ENCODE measurements at regions of chr10 and their contacts with region 1.

Region 1: GRCh38 chr10:17737027-17737965 is 14.7 kb upstream of the TMEM236 start:
- DNase-seq: peak; percentile 76 to 85 (median 84)
- ATAC-seq: peak; percentile 49 to 64
- H3K4me3 ChIP-seq: no peak overlapping the region
- H3K27ac ChIP-seq: peak overlapping the region; percentile 14
- H3K4me1 ChIP-seq: peaks cover 5% of the 10 kb centered on the region
- H3K27me3 ChIP-seq: no peaks in the 10 kb centered on the region

Region 2: DNA sequence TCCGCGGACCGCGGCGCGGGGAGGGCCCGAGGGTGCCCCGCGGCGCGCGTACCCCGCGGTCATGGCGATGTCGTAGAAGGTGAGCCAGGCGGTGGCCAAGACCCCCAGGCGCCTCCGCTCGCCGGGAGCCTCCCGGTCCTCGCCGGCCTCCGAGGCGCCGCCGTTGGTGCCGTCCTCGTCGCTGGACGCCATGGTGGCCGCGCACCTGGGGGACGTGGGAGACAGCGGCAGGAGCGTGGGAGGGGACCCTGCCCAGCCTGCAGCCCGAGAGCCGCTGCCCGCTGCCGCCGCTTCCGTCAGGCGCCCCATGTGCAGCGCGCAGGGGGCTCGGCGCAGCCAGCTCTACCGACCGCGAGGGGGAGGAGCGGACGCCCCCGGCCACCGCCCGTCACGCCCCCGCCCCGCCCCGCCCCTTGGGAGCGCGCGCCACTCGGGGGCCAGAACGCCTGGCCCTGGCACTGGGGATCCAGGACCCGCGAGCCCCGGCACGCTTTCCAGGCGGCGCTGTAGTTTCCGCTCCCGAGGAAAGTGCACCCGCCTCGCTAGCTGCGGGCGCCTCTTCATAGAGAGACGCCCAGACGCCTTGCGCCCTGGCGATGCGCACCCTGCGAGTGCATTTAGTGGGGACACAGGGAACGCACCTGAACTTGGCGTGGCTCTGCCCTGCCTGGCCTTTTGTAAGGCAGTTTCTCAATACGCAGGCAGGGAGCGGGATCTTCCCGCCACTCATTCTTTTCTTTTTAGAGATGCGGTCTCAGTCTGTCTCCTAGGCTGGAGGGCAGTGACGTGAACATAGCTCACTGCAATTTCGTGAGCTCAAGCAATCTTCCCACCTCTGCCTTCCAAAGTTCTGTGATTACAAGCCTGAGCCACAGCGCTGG is 120.0 kb before region 1 on chr10 and contains the start of gene HACD1:
- intact Hi-C with region 1: loop called in 1 of 4 experiments (anchors 10 kb)
- DNase-seq: peak; percentile 62 to 86 (median 83)
- ATAC-seq: peak; percentile 90
- H3K4me3 ChIP-seq: peak within 1 kb of the TSS; percentile 80
- H3K27ac ChIP-seq: peak within 1 kb of the TSS; percentile 75
- H3K4me1 ChIP-seq: no peaks in the 10 kb centered on the region
- H3K27me3 ChIP-seq: no peaks in the 10 kb centered on the region
- total RNA-seq, gene HACD1: 107 to 165 (median 160) TPM